ENCODE measurements at regions of chr3 and their contacts with region 1.

Region 1: DNA sequence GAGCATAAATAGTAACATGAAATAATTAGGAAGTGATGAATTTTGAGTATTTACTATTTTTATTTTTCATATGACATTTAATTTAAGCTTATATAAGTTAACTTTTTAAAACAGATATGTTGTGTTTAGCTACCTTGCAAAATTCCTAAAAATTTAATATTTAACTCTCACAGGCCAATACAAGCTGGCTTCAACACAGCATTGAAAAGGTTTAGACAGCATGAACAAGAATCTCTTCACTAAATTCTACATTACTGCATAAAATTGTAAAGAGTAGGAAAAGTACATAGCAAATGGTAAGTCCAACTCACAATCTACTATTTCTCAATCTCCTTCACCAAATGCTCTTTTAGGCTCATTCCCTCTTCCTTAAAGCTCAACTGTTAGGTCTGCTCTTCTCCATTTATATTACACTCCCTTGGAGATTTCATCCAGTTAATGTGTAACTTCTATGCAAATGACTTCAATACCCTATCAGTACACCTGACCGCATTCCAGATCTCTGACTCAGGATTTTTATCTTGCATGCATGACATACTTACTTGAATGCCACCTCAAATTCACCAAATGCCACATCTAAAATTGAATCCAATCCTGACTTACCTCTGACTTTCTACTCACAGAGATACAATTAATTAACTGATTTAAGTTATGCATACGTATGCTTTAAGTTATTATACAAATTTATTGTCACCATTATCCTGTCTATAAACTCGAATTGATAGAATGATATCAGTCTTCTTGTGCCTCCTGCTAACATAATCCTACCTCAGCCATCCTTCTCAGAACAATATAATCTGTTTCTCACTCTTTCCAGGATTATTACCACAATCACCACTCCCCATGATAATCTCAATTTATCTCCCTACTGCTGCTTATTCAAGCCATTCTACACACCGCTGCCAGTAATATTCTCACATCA is 127.0 kb downstream of the STAG1 start:
- DNase-seq: no peak
- ATAC-seq: no peak
- H3K4me3 ChIP-seq: no peak overlapping the region
- H3K4me3 Mint-ChIP-seq: no peak overlapping the region
- H3K27ac ChIP-seq: no peak overlapping the region
- H3K27ac Mint-ChIP-seq: no peak overlapping the region
- H3K4me1 ChIP-seq: no peaks in the 10 kb centered on the region
- H3K4me1 Mint-ChIP-seq: peaks cover 2 to 41% (median 24%) of the 10 kb centered on the region in 7 donors
- H3K27me3 ChIP-seq: no peaks in the 10 kb centered on the region
- H3K27me3 Mint-ChIP-seq: no peaks in the 10 kb centered on the region

Region 2: DNA sequence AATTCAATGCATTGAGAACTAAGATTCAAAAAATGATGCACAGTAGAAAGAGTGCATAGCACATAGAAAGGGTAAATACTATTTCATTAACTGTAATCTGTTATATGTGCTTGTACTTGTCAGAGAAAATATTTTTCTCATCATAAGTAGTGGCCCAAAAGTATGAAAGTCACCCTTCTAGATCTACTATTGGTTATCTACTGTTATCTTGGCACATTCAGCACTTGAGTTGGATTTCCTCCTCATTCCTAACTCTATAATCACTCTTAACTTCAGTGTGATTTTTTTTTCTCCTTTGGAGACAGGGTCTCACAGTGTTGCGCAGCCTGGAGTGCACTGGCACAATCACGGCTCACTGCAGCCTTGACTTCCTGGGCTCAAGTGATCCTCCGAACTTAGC is 180.6 kb before region 1 on chr3:
- CTCF ChIA-PET with region 1: no interaction called
- POLR2A ChIA-PET with region 1: no interaction called
- intact Hi-C with region 1: no loop called
- DNase-seq: no peak
- ATAC-seq: no peak
- H3K4me3 ChIP-seq: no peak overlapping the region
- H3K4me3 Mint-ChIP-seq: peak overlapping the region in 1 of 10 donors; percentile 39
- H3K27ac ChIP-seq: no peak overlapping the region
- H3K27ac Mint-ChIP-seq: peak overlapping the region in 1 of 9 donors; percentile 15
- H3K4me1 ChIP-seq: no peaks in the 10 kb centered on the region
- H3K4me1 Mint-ChIP-seq: no peaks in the 10 kb centered on the region
- H3K27me3 ChIP-seq: no peaks in the 10 kb centered on the region
- H3K27me3 Mint-ChIP-seq: no peaks in the 10 kb centered on the region

Region 3: GRCh38 chr3:136604961-136605360 is 20.2 kb before region 1 on chr3:
- CTCF ChIA-PET with region 1: interaction called, 4 read pairs
- POLR2A ChIA-PET with region 1: no interaction called
- intact Hi-C with region 1: loop called in 1 of 2 experiments (anchors 2 kb)
- DNase-seq: no peak
- ATAC-seq: no peak
- H3K4me3 ChIP-seq: no peak overlapping the region
- H3K4me3 Mint-ChIP-seq: no peak overlapping the region
- H3K27ac ChIP-seq: no peak overlapping the region
- H3K27ac Mint-ChIP-seq: peak overlapping the region in 3 of 9 donors; percentile 3 to 8 (median 8)
- H3K4me1 ChIP-seq: no peaks in the 10 kb centered on the region
- H3K4me1 Mint-ChIP-seq: peaks cover under 1 to 17% (median 11%) of the 10 kb centered on the region in 7 donors
- H3K27me3 ChIP-seq: no peaks in the 10 kb centered on the region
- H3K27me3 Mint-ChIP-seq: no peaks in the 10 kb centered on the region

Measured in naive thymus-derived CD4-positive, alpha-beta T cell (primary cell).